HEK293T (cell line): ENCODE measurements at regions of chr4 and their contacts with region 1.

Region 1: DNA sequence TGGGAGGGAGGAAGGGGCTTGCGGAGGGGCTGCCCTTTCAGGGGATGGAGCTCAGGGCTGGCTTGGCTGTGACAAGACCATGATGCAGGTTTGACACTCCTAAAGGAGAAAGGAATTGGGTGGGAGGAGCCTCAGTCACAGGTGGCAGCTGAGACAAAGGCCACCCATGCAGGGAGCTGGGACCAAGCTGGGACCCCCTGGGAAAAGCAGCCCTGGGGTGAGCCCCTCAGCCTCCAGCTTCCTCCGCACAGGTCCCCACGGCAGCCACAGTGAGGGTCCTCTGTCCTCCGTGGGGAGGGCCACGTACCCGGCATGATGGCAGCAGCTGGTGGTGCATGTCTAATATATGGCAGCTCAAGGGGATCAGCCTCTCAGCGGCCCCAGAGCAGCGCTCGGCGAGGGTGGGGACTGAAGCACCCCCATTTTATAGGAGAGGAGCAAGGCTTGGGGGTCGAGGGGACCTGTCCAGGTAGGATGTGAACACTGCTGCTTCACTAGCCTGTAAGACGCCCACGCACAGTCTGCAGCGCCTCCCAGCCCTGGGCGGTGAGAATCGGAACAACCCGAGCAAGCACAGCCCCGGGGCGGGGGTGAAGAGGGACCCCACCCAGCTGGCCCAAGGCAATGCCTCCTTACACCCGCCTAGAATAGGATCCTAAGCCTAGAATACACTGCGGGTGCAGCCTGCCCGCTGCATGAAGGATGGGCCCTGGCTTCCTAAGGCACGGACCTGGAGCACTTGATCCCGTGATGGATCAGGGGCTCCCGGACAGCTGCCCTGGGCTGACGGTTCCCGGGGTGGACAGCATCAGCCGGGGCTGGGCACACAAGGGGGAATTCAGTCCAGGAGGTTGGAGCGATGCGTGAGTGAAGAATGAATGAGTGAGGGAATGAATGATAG is 17.5 kb downstream of the ADRA2C start:
- DNase-seq: peak; percentile 66

Region 2: GRCh38 chr4:3765271-3766040 is 18.2 kb before region 1 on chr4:
- CTCF ChIA-PET with region 1: interaction called, 17 read pairs
- POLR2A ChIA-PET with region 1: interaction called, 17 read pairs
- DNase-seq: peak; percentile 78